Naive thymus-derived CD4-positive, alpha-beta T cell (primary cell): ENCODE measurements at regions of chr22 and their contacts with region 1.

Region 1: GRCh38 chr22:28741758-28742561 is at the starts of genes CHEK2 and HSCB:
- DNase-seq: peak; percentile 80 to 99 (median 96)
- ATAC-seq: peak; percentile 98
- H3K4me3 ChIP-seq: peak within 1 kb of the TSS; percentile 99
- H3K4me3 Mint-ChIP-seq: peak within 1 kb of the TSS; percentile 81 to 94 (median 87)
- H3K27ac ChIP-seq: peak within 1 kb of the TSS; percentile 90
- H3K27ac Mint-ChIP-seq: peak within 1 kb of the TSS; percentile 79 to 93 (median 89)
- H3K4me1 ChIP-seq: peaks cover 3 to 9% of the 10 kb centered on the region in 2 donors
- H3K4me1 Mint-ChIP-seq: peaks cover 14 to 49% (median 38%) of the 10 kb centered on the region in 7 donors
- H3K27me3 ChIP-seq: no peaks in the 10 kb centered on the region
- H3K27me3 Mint-ChIP-seq: no peaks in the 10 kb centered on the region
- total RNA-seq, gene CHEK2: 8.4 to 36.7 (median 10.6) TPM
- total RNA-seq, gene HSCB: 8.2 to 10.9 (median 9.0) TPM

Region 2: GRCh38 chr22:28442264-28442710 is 299.7 kb before region 1 on chr22:
- CTCF ChIA-PET with region 1: no interaction called
- POLR2A ChIA-PET with region 1: no interaction called
- intact Hi-C with region 1: loop called in 1 of 2 experiments (anchors 5 kb)
- DNase-seq: peak; percentile 54 to 79 (median 77)
- ATAC-seq: peak; percentile 91
- H3K4me3 ChIP-seq: peak overlapping the region; percentile 72
- H3K4me3 Mint-ChIP-seq: peak overlapping the region; percentile 88 to 97 (median 94)
- H3K27ac ChIP-seq: peak overlapping the region; percentile 58
- H3K27ac Mint-ChIP-seq: peak overlapping the region; percentile 66 to 90 (median 84)
- H3K4me1 ChIP-seq: peaks cover 0 to 15% of the 10 kb centered on the region in 2 donors
- H3K4me1 Mint-ChIP-seq: peaks cover 10 to 27% (median 24%) of the 10 kb centered on the region in 7 donors
- H3K27me3 ChIP-seq: peaks cover 0 to 4% of the 10 kb centered on the region in 2 donors
- H3K27me3 Mint-ChIP-seq: peaks cover 0 to 26% (median 0%) of the 10 kb centered on the region in 5 donors

Region 3: GRCh38 chr22:28557184-28557583 is 184.8 kb before region 1 on chr22:
- CTCF ChIA-PET with region 1: no interaction called
- POLR2A ChIA-PET with region 1: no interaction called
- intact Hi-C with region 1: no loop called
- DNase-seq: no peak
- ATAC-seq: no peak
- H3K4me3 ChIP-seq: no peak overlapping the region
- H3K4me3 Mint-ChIP-seq: no peak overlapping the region
- H3K27ac ChIP-seq: no peak overlapping the region
- H3K27ac Mint-ChIP-seq: no peak overlapping the region
- H3K4me1 ChIP-seq: no peaks in the 10 kb centered on the region
- H3K4me1 Mint-ChIP-seq: no peaks in the 10 kb centered on the region
- H3K27me3 ChIP-seq: no peaks in the 10 kb centered on the region
- H3K27me3 Mint-ChIP-seq: peaks cover 6 to 32% (median 22%) of the 10 kb centered on the region in 5 donors

Region 4: GRCh38 chr22:28674121-28674563 is 67.8 kb before region 1 on chr22:
- CTCF ChIA-PET with region 1: no interaction called
- POLR2A ChIA-PET with region 1: no interaction called
- intact Hi-C with region 1: loop called (anchors 1 kb)
- DNase-seq: peak in 7 of 9 donors; percentile 57 to 75 (median 61)
- ATAC-seq: peak; percentile 91
- H3K4me3 ChIP-seq: no peak overlapping the region
- H3K4me3 Mint-ChIP-seq: peak overlapping the region in 9 of 10 donors; percentile 70 to 95 (median 78)
- H3K27ac ChIP-seq: no peak overlapping the region
- H3K27ac Mint-ChIP-seq: peak overlapping the region; percentile 88 to 100 (median 98)
- H3K4me1 ChIP-seq: peaks cover 16 to 17% of the 10 kb centered on the region in 2 donors
- H3K4me1 Mint-ChIP-seq: peaks cover 23 to 35% (median 34%) of the 10 kb centered on the region in 7 donors
- H3K27me3 ChIP-seq: peaks cover 10 to 42% of the 10 kb centered on the region in 2 donors
- H3K27me3 Mint-ChIP-seq: peaks cover 47 to 83% (median 66%) of the 10 kb centered on the region in 5 donors

Region 5: DNA sequence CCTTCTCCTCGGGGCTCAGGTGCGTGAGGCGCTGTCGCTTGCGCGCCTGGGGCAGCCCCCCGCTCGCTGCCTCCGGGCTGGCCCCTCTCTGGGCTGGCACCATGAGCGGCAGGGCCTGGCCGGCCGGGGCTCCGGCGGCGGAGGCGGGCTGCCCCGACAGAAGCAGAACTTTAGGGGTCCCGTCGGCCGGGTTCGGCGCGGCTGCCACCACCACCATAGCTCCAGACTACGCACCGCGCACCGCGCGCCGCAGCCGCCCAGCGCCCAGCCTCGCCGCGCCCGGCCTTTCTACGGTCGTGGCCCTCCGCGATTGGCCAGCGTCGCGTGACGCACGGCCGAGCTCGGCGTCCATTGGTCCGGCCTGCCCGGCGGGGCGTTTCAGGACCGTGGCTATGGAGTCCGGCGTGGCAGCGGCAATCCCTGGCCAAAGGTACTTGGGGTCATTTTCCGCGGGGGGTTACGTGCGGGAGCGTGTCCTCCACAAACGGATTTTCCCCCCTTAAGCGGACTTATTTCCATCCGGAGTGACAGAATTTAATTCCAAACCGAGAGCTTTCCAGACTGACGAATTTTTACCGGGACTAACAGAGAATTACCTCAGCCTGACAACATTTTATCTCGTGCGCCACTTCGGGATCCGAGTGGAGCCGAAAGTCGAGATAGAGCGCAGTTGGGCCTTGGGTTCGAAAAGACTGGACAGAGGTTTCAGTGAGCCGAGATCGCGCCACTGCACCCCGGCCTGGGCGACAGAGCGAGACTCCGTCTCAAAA is 58.5 kb after region 1 on chr22 and contains the start of gene XBP1:
- CTCF ChIA-PET with region 1: no interaction called
- POLR2A ChIA-PET with region 1: interaction called, 29 read pairs
- intact Hi-C with region 1: loop called (anchors 1 kb)
- DNase-seq: peak; percentile 82 to 94 (median 88)
- ATAC-seq: peak; percentile 96
- H3K4me3 ChIP-seq: peak within 1 kb of the TSS; percentile 81
- H3K4me3 Mint-ChIP-seq: peak within 1 kb of the TSS; percentile 91 to 99 (median 95)
- H3K27ac ChIP-seq: peak within 1 kb of the TSS; percentile 99
- H3K27ac Mint-ChIP-seq: peak within 1 kb of the TSS; percentile 90 to 100 (median 99)
- H3K4me1 ChIP-seq: peaks cover 24 to 41% of the 10 kb centered on the region in 2 donors
- H3K4me1 Mint-ChIP-seq: peaks cover 26 to 63% (median 50%) of the 10 kb centered on the region in 7 donors
- H3K27me3 ChIP-seq: no peaks in the 10 kb centered on the region
- H3K27me3 Mint-ChIP-seq: no peaks in the 10 kb centered on the region
- total RNA-seq, gene XBP1: 120 to 293 (median 144) TPM

Region 6: GRCh38 chr22:28882878-28883656 is 141.1 kb after region 1 on chr22 and contains the start of gene ZNRF3:
- CTCF ChIA-PET with region 1: no interaction called
- POLR2A ChIA-PET with region 1: interaction called, 3 read pairs
- intact Hi-C with region 1: loop called (anchors 1 kb)
- DNase-seq: peak; percentile 76 to 91 (median 87)
- ATAC-seq: peak; percentile 98
- H3K4me3 ChIP-seq: peak within 1 kb of the TSS; percentile 90
- H3K4me3 Mint-ChIP-seq: peak within 1 kb of the TSS; percentile 66 to 94 (median 88)
- H3K27ac ChIP-seq: peak within 1 kb of the TSS; percentile 15
- H3K27ac Mint-ChIP-seq: peak within 1 kb of the TSS; percentile 33 to 78 (median 62)
- H3K4me1 ChIP-seq: peaks cover 8 to 12% of the 10 kb centered on the region in 2 donors
- H3K4me1 Mint-ChIP-seq: peaks cover 13 to 29% (median 21%) of the 10 kb centered on the region in 7 donors
- H3K27me3 ChIP-seq: peaks cover 0 to 3% of the 10 kb centered on the region in 2 donors
- H3K27me3 Mint-ChIP-seq: peaks cover 8 to 72% (median 16%) of the 10 kb centered on the region in 5 donors
- total RNA-seq, gene ZNRF3: 0.59 to 0.98 (median 0.70) TPM

Region 7: DNA sequence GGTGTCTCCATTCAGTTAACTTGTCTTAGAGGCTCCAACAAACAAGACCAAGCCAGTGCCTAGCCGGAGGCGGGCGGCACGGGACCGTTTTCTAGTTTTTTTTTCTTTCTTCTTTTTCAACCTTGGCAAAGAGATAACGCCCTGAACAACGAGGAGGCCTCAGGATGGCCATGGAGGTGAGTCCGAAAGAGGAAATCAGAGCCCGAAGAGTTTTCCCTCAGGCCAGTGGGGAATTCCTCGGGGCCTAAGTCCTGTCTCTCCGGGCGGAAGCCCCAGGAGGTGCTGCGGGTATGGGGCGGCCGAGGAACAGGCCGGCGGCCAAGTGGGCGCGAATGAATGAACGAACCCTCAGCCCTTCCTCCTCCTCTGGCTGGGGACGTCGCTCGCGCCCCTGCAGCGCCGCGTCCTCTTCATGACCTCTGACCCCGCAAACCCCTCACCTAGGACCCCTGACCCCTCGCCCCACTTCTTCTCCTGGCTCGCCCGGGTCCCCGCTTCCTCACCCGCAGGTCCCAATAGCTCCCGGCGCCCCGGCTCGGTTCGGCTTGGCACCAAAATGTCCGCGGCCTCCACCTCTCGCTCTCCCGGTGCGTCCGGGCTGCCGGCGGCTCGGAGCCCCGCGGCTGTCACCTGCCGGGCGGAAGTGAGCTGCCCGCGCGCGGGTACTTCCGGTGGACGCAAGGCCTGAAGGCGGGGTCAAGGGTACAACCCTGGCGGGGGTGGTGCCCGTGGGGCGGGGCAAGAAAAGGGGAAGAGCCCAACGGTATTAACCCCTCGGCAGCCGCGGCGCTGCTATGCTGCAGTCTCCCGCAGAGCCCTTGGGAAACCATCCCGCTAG is 646.2 kb after region 1 on chr22 and contains the start of gene AP1B1:
- CTCF ChIA-PET with region 1: no interaction called
- POLR2A ChIA-PET with region 1: no interaction called
- intact Hi-C with region 1: loop called in 1 of 2 experiments (anchors 5 kb)
- DNase-seq: peak; percentile 79 to 96 (median 86)
- ATAC-seq: peak; percentile 98
- H3K4me3 ChIP-seq: peak within 1 kb of the TSS; percentile 87
- H3K4me3 Mint-ChIP-seq: peak within 1 kb of the TSS; percentile 91 to 96 (median 94)
- H3K27ac ChIP-seq: peak within 1 kb of the TSS; percentile 73
- H3K27ac Mint-ChIP-seq: peak within 1 kb of the TSS; percentile 87 to 97 (median 90)
- H3K4me1 ChIP-seq: peaks cover 7 to 13% of the 10 kb centered on the region in 2 donors
- H3K4me1 Mint-ChIP-seq: peaks cover 31 to 51% (median 48%) of the 10 kb centered on the region in 7 donors
- H3K27me3 ChIP-seq: no peaks in the 10 kb centered on the region
- H3K27me3 Mint-ChIP-seq: no peaks in the 10 kb centered on the region
- total RNA-seq, gene AP1B1: 38.5 to 77.7 (median 45.8) TPM